WTC11 (cell line): ENCODE measurements at regions of chr13 and their contacts with region 1.

Region 1: DNA sequence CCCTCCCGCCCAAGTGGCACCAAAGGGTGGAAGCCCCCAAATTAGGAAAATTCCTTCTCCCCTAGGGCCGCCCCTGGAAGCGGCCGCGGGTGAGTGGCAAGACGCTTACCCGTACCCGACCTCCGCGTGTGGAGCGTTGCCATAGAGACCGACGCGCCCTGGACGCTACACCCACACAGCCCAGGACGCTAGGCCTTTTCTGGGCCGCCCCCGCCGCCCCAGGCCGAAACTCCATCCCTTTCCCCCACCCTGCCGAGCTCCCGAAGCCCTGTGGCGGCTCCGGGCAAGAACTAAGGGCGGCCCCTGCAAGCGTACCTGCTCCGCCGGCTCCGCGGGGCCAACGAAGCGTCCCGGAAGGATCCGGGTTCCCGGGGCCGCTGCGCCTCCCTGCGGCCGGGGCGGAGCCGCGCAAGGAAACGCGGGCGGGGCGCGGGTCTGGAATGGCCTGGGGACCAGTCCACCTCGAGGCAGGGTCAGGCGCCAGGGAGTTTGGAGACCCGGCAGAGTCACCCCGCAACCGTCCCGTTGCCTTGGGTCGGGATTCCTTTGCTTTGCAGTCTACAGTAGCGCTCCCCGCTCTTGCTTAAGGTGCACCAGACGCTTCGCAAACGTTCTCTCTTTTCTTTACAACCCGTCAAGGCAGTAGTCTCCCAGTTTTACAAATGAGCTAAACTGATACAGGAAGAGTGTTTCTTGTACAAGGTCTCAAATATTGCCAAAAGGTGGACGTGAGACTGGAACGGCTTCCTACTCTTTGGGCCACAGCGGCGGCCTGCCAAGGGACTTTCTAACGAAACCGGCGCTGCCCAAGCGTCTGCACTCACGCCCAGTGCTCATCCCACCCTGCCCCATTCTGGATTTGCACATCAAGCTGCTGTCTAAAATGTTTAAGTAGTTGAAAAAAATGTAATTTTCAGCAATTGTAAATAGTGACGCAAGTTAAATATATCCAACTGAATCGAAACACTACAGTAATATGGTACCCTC is at the start of gene NEK5:
- DNase-seq: peak; percentile 92
- ATAC-seq: peak; percentile 89
- H3K4me3 Mint-ChIP-seq: peak within 1 kb of the TSS; percentile 82
- H3K27ac Mint-ChIP-seq: peak within 1 kb of the TSS; percentile 12; the same call in 1 of the 2 replicates
- H3K4me1 Mint-ChIP-seq: peaks cover 10% of the 10 kb centered on the region
- H3K27me3 Mint-ChIP-seq: peaks cover 7% of the 10 kb centered on the region; the same call in 1 of the 2 replicates
- CTCF ChIP-seq: peak; percentile 51
- total RNA-seq, gene NEK5: 0.55 to 0.76 TPM (median 0.73 TPM) in 3 replicates

Region 2: DNA sequence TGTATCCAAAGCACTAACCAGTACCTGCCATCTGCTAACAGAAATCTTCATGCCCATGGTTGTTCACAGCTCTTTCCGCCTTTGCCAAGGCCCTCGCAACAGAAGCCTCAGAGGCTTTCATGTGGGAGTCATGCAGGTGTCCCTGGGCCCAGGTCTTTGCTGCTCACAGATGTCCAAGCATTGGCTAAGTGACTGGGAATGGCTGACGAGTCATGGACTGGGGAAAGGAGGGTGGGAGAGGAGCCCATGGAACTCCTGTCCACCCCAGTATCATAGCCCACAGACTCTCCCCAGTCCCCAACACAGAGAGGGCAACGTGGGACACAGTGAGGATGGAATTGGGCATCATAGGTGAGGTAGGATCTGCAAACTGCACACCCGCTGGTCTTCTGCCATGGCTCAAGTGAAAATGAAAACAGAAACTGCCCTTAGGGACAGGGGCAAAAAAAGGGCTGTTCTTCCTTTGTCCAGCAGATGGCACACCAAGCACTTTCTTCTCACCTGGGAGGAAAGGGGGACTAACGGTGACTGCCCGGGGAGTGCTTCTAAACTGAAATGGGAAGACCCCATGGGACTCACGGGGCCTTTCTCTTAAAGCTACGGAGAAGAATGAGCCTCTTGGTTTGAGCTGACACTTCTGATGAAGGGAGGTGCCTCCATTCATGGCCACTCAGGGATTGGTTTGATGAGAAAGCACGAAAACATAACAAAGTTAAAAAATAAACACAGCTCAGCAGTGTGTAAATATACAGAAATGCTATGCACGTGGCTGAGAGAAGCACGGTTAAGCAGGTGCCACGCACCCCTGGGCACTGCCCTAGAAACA is 314.0 kb before region 1 on chr13:
- CTCF ChIA-PET with region 1: interaction called, 13 read pairs
- POLR2A ChIA-PET with region 1: no interaction called
- DNase-seq: peak; percentile 80
- ATAC-seq: peak; percentile 77
- H3K4me3 Mint-ChIP-seq: no peak overlapping the region; the same call in 1 of the 2 replicates
- H3K27ac Mint-ChIP-seq: peak overlapping the region; percentile 57; the same call in 1 of the 2 replicates
- H3K4me1 Mint-ChIP-seq: peaks cover 37% of the 10 kb centered on the region
- H3K27me3 Mint-ChIP-seq: peaks cover under 1% of the 10 kb centered on the region; the same call in 1 of the 2 replicates
- CTCF ChIP-seq: peak; percentile 74

Region 3: DNA sequence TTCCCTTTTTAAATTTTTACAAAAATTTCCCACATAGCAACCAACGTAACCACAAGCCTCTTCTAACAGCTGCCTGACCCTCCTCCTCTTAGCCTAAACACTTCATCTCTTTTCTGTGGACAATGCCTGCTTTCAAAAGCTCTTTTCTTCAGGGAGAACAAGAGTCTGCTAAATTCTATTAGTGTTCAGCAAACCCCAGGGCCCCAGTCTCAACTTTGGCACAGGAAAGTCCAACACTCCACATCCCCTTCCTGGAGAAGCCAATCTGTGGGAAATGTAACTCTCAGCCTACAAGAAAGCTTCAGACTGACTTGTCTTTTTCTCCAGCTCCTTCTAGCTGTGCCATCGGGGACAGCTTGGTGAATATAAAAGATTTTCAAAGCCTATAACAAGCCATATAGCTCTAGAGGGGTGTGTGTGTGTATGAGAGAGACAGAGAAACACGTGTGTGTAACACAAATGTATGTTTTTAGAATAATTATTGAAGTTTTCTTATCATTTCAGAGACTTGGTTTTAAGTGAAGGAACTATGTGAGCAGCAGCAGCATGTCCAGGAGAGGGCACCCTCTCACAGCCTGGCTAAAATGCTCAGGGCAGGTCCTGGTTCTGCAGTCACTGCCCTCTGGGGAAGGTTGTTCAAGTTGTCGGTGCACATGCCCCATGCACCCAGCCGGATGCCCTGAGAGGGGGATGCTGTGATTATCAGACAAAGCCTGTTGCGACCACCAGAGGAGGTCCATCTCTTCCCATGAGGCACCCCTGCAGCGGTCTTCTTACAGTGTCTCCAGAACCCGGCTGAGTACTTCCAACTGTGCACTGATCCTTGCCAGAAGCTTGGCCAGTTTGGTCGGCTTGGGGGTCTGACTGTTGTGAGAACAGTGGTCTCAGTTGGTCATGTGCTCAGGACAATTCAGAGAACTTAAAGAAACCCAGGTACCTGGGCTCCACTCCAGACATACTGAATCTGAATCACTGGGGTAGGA is 232.8 kb before region 1 on chr13:
- CTCF ChIA-PET with region 1: interaction called, 85 read pairs
- POLR2A ChIA-PET with region 1: no interaction called
- DNase-seq: peak; percentile 69
- ATAC-seq: peak; percentile 95
- H3K4me3 Mint-ChIP-seq: no peak overlapping the region
- H3K27ac Mint-ChIP-seq: no peak overlapping the region
- H3K4me1 Mint-ChIP-seq: peaks cover 11% of the 10 kb centered on the region
- H3K27me3 Mint-ChIP-seq: no peaks in the 10 kb centered on the region
- CTCF ChIP-seq: peak; percentile 27; the same call in 1 of the 2 replicates

Region 4: DNA sequence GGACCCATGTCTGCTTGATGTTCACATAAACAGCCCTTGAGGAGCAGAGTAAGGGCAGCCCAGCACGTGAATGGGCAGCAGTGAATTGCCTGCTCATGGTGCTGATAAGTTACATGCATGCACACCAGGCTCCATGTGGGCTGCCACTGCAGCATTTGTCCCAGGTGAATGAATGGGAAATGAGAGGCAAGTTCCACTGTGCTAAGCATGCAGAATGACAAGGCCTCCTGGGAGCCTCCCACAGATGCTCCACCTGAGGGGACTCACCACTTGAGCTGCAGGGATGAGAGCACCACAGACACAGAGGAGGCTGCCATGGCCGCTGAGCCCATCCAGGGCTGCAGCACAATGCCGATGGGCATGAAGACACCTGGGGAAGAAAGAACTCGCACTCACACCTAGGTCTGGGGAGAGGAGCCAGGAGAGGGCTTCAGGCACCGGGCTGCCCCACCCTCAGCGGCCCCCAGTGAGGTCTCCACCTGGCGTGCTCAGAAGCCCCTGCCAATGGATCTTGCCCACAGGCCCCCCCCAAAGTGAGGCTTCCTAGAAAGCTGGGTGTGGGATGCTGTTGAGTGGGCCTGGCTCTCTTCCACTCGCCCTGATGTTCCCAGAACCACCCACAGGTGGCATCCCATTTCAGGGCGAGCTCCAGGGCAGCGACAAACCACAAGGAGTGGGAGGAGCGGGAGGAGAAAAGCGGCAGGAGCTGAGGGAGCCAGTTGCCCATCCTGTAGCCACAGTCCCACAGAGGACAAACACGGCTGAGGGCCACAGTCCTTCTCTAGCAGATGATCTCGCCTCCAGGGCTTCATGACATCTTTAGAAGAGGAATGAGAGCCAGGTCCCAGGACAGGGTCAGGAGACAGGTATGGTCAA is 193.4 kb before region 1 on chr13:
- CTCF ChIA-PET with region 1: interaction called, 66 read pairs
- POLR2A ChIA-PET with region 1: interaction called, 3 read pairs
- DNase-seq: peak; percentile 63
- ATAC-seq: peak; percentile 94
- H3K4me3 Mint-ChIP-seq: no peak overlapping the region
- H3K27ac Mint-ChIP-seq: no peak overlapping the region
- H3K4me1 Mint-ChIP-seq: 0 out of 2 replicates have a peak, but pooled peaks cover 3% of the 10 kb centered on the region
- H3K27me3 Mint-ChIP-seq: no peaks in the 10 kb centered on the region
- CTCF ChIP-seq: no peak

Region 5: DNA sequence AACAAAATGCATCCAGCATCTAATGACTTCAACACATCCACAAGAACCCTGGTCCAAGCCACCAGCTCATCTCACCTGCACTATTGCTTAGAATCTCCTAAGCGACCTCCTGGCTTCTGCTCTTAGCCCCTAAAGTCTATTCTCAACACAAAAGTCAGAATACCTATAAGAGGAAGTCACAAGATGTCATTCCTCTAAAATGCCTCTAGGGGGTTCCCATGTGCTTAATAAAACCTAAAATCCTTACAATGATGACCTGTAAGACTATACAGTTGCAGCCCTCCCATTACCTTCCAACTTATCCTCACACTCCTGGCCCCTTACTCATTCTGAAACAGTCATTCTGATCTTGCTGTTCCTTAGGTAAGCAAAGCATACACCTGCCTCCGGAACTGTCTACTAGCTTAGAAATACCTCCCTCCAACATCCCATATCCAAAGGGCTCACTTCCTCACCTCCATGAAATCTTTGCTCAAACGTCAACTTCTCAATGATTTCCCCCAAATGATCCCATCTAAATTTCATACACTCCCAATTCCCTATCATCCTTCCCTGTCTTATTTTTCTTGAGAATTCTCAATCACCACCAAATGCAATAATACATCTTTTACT is 127.8 kb before region 1 on chr13:
- CTCF ChIA-PET with region 1: interaction called, 36 read pairs
- POLR2A ChIA-PET with region 1: no interaction called
- DNase-seq: no peak
- ATAC-seq: peak; percentile 63
- H3K4me3 Mint-ChIP-seq: no peak overlapping the region
- H3K27ac Mint-ChIP-seq: peak overlapping the region; percentile 35; the same call in 1 of the 2 replicates
- H3K4me1 Mint-ChIP-seq: peaks cover 61% of the 10 kb centered on the region
- H3K27me3 Mint-ChIP-seq: no peaks in the 10 kb centered on the region; the same call in 1 of the 2 replicates
- CTCF ChIP-seq: 0 out of 2 replicates have a peak, but pooled peaks have one; percentile 39

Region 6: DNA sequence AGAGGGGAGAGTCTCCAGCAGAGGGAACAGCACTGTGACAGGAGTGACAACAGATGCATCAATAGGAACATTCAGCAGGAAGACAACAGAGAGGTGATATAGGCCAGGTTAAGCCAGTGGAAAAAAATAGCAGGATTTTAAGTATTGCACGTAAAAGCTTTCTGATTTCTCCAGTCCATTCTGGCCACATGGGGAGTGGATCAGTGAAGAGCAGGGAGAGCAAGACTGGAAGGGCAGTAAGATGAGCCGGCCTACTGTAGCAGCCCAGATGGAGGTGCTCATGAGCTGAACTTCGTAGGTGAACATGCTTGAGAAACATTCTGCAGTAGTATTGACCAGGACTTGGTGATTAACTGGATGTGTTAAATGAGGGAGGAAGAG is 102.8 kb before region 1 on chr13:
- CTCF ChIA-PET with region 1: interaction called, 19 read pairs
- POLR2A ChIA-PET with region 1: no interaction called
- DNase-seq: no peak
- ATAC-seq: peak; percentile 86
- H3K4me3 Mint-ChIP-seq: no peak overlapping the region
- H3K27ac Mint-ChIP-seq: peak overlapping the region; percentile 27; the same call in 1 of the 2 replicates
- H3K4me1 Mint-ChIP-seq: peaks cover 9% of the 10 kb centered on the region
- H3K27me3 Mint-ChIP-seq: no peaks in the 10 kb centered on the region; the same call in 1 of the 2 replicates
- CTCF ChIP-seq: no peak

Region 7: GRCh38 chr13:52179925-52180324 is 50.9 kb after region 1 on chr13:
- CTCF ChIA-PET with region 1: no interaction called
- POLR2A ChIA-PET with region 1: no interaction called
- DNase-seq: no peak
- ATAC-seq: no peak
- H3K4me3 Mint-ChIP-seq: no peak overlapping the region
- H3K27ac Mint-ChIP-seq: no peak overlapping the region
- H3K4me1 Mint-ChIP-seq: no peaks in the 10 kb centered on the region
- H3K27me3 Mint-ChIP-seq: no peaks in the 10 kb centered on the region
- CTCF ChIP-seq: no peak

Region 8: DNA sequence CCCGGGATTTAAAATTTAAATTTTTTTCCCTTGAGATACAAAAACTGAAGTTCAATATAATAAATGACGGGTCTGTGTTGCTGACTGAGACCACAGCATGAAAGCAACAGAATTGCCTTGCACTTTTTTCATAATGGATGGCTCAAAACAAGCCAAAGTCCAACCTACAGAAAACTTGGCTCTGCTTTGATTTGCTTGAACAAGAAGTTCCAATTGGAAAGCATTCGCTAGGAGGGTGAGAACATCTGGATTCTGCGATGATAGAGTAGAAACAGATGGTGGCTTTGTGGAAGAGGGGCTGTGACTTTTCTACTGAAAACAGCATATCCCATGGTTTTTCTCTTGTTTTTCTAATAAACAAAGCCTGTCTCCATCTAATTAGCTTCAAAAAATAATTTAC is 230.5 kb after region 1 on chr13:
- CTCF ChIA-PET with region 1: no interaction called
- POLR2A ChIA-PET with region 1: no interaction called
- DNase-seq: no peak
- ATAC-seq: no peak
- H3K4me3 Mint-ChIP-seq: no peak overlapping the region
- H3K27ac Mint-ChIP-seq: no peak overlapping the region
- H3K4me1 Mint-ChIP-seq: 0 out of 2 replicates have a peak, but pooled peaks cover 2% of the 10 kb centered on the region
- H3K27me3 Mint-ChIP-seq: no peaks in the 10 kb centered on the region; the same call in 1 of the 2 replicates
- CTCF ChIP-seq: no peak